ENCODE measurements at regions of chr2 and their contacts with region 1.

Region 1: GRCh38 chr2:222561817-222562645 is 93.9 kb downstream of the FARSB start:
- ATAC-seq: peak; percentile 58 to 92 (median 82)
- H3K4me3 ChIP-seq: no peak overlapping the region
- H3K27ac ChIP-seq: no peak overlapping the region
- H3K4me1 ChIP-seq: no peaks in the 10 kb centered on the region

Region 2: DNA sequence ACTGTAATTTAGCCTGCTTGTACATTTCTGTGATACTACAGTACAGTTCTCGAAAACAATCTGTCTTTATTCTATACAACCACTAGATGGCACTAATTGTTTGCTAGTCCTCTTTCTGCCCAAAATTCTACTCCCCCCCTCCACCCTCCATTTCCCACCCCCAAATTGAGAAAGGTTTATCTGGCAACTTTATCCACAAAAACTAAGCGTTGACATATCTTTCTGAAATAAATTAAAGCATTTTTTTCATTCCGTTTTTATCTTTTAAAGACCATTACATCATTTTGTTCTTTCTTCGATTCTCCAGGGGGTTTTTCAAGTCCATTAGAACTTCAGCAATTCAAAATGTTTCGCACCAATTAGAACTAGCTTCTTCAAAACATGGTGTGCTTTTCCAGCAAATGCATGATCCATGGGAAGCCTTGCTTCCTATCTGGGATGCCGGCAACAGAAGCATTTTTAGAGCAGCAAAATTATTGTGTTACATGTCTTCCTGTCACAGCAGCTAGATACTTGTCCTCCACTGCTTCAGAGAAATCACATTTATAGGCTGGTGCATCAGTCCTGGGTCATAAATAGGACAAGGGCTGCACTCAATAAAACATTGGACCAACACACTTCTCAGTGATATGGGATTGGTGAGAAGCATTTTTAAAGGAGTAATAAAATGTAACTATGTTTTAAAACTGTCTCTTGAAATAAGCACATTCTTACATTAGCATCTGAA is 504.5 kb before region 1 on chr2:
- in situ Hi-C with region 1: loop called in 6 of 9 experiments (anchors 25 kb)
- ATAC-seq: peak in 3 of 8 experiments; percentile 19 to 52 (median 39)
- H3K4me3 ChIP-seq: no peak overlapping the region
- H3K27ac ChIP-seq: no peak overlapping the region
- H3K4me1 ChIP-seq: no peaks in the 10 kb centered on the region

Region 3: GRCh38 chr2:222318026-222318711 is 243.9 kb before region 1 on chr2:
- in situ Hi-C with region 1: loop called in 4 of 9 experiments (anchors 25 kb)
- ATAC-seq: peak; percentile 59 to 96 (median 73)
- H3K4me3 ChIP-seq: peak overlapping the region; percentile 30 to 44 (median 42)
- H3K27ac ChIP-seq: no peak overlapping the region
- H3K4me1 ChIP-seq: peaks cover 0 to 5% of the 10 kb centered on the region in 2 donors

Region 4: DNA sequence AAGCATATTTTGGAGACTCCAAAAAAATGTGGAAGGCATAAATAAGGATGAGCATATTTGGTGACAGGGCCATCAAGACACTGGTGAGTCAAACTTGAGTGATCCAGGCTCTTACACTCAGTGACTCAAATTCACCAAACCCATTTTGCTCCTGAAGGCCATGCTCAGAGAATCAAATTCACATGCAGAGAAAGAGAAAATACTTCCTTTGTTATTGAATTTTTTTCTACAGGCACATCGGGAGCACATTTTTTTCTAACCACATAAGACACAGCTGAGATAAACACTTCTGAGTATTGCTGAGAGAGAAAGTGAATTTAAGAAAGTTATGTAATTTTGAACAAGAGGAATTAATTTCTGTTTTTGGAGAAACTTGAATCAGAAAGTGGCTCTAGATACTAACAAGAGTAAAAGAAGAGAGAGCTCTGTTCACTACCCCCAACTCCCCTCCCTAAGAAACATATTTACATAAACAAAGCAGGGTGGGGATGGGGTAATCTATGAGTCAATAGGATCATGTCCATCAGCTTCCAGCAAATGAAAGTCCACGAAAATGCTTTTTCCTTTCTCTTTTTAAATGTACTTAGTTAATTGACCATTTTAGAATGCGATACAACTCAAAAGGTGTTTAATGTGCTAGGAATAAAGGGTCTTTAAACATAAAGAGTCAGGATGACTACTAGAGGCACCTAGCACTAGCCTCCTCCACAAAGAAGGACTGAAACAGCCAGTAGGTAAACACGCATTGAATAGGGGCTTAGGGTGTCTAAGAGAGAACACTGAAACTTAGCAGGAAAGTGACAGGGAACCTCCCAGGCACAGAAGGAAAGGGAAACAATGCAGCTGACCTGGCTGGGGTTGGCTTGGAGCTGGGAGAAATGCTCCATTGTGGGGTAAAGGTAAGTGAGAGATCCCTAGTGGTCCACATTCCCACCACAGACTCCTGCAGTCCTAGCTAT is 642.2 kb after region 1 on chr2:
- in situ Hi-C with region 1: no loop called
- ATAC-seq: peak in 3 of 8 experiments; percentile 93 to 98 (median 95)
- H3K4me3 ChIP-seq: no peak overlapping the region
- H3K27ac ChIP-seq: no peak overlapping the region
- H3K4me1 ChIP-seq: no peaks in the 10 kb centered on the region